ENCODE measurements at regions of chr4 and their contacts with region 1.

Region 1: GRCh38 chr4:141220655-141221605 is at the start of gene ZNF330:
- DNase-seq: peak; percentile 94 to 96
- ATAC-seq: peak; percentile 97 to 99 (median 98)
- H3K4me3 ChIP-seq: peak within 1 kb of the TSS; percentile 66 to 99 (median 90)
- H3K27ac ChIP-seq: peak within 1 kb of the TSS; percentile 91 to 99 (median 97)
- H3K4me1 ChIP-seq: peaks cover 0 to 63% (median 25%) of the 10 kb centered on the region in 9 donors
- H3K27me3 ChIP-seq: no peaks in the 10 kb centered on the region
- CTCF ChIP-seq: peak in 6 of 9 donors; percentile 3 to 48 (median 32)
- total RNA-seq, gene ZNF330: 99.3 to 201 (median 148) TPM

Region 2: DNA sequence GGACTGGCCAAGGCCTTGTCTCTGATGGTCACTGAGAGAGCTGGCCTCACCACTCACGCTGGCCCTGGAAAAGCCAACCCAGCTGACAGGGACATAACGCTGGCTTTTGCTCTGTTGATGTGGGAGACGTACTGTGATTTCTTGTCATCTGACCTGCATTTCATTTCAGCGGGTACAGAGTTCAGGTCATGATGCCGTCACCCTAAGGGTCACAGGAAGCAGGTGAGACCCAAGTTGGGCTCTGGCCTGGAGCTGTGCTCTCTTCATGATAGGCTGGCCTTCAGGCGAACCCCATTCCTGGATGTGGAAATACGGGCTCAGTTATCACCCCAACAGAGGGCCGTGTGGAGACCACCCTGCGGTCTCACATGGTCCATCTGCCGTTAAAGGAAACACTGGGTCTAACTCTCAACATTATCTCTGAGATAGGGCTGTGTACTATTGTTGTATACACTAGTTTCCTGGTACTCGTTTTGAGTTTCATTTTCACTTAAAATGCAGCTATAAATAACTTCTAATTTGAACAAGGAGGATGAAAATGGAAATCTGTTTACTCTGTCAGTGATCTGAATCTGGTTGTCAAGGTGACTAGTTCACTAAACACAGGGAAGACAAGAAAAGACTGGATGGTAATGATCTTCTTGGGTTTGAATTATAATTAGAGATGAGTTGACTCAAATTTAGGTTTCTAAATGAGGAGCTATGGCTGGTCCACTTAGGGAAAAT is 553.9 kb before region 1 on chr4:
- intact Hi-C with region 1: no loop called
- DNase-seq: no peak
- ATAC-seq: peak in 3 of 8 donors; percentile 12 to 33 (median 28)
- H3K4me3 ChIP-seq: no peak overlapping the region
- H3K27ac ChIP-seq: peak overlapping the region in 3 of 10 donors; percentile 16 to 23 (median 22)
- H3K4me1 ChIP-seq: peaks cover 0 to 8% (median 0%) of the 10 kb centered on the region in 9 donors
- H3K27me3 ChIP-seq: no peaks in the 10 kb centered on the region
- CTCF ChIP-seq: no peak

Region 3: DNA sequence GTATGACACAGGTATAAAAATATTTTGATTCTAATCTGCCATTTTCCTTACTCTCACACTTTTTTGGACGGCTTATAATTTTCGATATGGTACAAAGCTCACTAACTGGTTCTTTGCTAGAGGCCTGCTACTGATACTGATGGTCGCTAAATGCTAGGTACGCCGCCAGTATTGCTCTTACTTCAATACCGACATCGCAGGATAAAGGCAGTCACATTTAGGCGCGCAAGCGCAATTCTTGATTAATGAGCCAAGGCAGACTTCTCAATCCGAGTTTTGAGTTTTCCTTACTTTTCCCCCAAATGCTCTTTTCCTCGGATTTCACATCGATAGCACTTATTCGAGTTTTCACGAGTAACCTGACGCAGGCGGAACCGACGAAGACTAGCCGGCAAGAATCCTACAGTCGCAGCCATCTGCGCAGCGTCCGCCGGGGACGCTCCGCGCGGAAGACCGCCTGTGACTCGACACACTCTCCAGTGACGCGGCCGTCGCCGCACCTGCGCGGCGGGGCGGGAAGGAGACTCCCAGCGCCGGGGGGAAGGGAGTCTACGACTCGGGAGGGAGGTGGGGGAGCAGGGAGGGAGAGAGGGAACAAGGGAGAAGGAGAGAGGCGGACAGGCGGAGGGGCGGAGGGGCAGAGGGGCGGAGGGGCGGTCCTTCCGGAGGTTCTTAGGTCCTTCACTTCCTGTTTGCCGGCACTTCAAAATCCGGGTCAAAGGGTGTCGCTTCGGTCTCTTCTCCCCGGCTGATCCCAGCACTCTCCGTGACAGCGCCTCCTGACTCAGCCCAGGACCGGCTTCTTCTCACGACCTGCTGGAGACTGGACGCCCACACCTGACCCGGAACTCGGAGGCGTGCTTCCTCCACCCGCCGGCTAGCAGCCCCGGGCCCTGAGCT is 1963.5 kb after region 1 on chr4 and contains the start of gene USP38:
- intact Hi-C with region 1: loop called in 1 of 10 experiments (anchors 10 kb)
- DNase-seq: peak; percentile 88 to 92
- ATAC-seq: peak; percentile 95 to 97 (median 96)
- H3K4me3 ChIP-seq: peak within 1 kb of the TSS; percentile 60 to 97 (median 86)
- H3K27ac ChIP-seq: peak within 1 kb of the TSS; percentile 79 to 98 (median 94)
- H3K4me1 ChIP-seq: peaks cover 7 to 57% (median 51%) of the 10 kb centered on the region in 9 donors
- H3K27me3 ChIP-seq: no peaks in the 10 kb centered on the region
- CTCF ChIP-seq: peak in 2 of 9 donors; percentile 2 to 18
- total RNA-seq, gene USP38: 15.6 to 24.2 (median 20.8) TPM

Measured in heart right ventricle (tissue), 16 donors.